ENCODE measurements at regions of chr17 and their contacts with region 1.

Region 1: DNA sequence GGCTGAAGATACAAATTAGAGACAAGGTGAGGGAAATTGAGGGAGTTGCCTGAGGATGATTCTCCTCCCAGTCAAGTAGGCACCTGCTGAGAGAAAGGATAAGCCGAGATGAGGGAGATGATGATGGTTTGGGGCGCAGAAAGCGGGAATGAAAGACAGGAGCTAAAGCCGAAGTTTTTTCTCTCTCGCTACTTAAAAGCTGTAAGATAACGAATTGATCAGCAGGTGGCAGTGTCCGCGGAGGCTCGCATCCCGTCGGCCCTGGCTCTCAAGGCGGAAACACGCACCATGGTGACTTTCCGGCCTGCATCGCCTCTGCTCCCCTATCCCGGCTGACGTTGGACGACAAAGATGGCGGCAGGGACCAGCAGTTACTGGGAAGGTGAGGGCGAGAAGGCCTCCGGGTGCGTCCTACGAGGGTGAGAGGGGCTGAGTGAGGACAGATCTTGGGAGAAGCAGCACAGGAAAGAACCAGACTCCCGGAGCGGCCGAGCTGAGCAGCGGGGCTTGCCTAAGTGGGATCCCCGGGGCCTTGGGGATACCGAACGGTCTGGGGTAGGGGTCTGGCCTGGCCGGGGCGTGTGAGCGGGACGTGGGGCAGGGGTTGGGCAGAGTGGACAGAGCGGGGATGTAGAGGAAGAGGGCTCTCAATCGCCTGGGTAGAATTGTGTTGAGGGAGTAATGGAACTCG is at the start of gene GOSR1:
- DNase-seq: peak; percentile 79
- ATAC-seq: peak; percentile 99
- H3K4me3 ChIP-seq: peak within 1 kb of the TSS; percentile 93
- H3K27ac ChIP-seq: peak within 1 kb of the TSS; percentile 99
- H3K4me1 ChIP-seq: peaks cover 7% of the 10 kb centered on the region
- H3K27me3 ChIP-seq: no peaks in the 10 kb centered on the region
- CTCF ChIP-seq: peak; percentile 72 to 88 (median 83)
- EP300 ChIP-seq: no peak
- POLR2A ChIP-seq: peak; percentile 100
- RAD21 ChIP-seq: peak; percentile 57
- polyA plus RNA-seq, gene GOSR1: 71.0 to 99.3 TPM

Region 2: GRCh38 chr17:30041551-30041950 is 435.7 kb before region 1 on chr17:
- CTCF ChIA-PET with region 1: no interaction called
- POLR2A ChIA-PET with region 1: no interaction called
- RAD21 ChIA-PET with region 1: no interaction called
- SMC1A ChIA-PET with region 1: no interaction called
- in situ Hi-C with region 1: no loop called
- intact Hi-C with region 1: no loop called
- DNase-seq: no peak
- ATAC-seq: no peak
- H3K4me3 ChIP-seq: no peak overlapping the region
- H3K27ac ChIP-seq: no peak overlapping the region
- H3K4me1 ChIP-seq: no peaks in the 10 kb centered on the region
- H3K27me3 ChIP-seq: no peaks in the 10 kb centered on the region
- CTCF ChIP-seq: no peak
- EP300 ChIP-seq: no peak
- POLR2A ChIP-seq: no peak
- RAD21 ChIP-seq: no peak

Region 3: DNA sequence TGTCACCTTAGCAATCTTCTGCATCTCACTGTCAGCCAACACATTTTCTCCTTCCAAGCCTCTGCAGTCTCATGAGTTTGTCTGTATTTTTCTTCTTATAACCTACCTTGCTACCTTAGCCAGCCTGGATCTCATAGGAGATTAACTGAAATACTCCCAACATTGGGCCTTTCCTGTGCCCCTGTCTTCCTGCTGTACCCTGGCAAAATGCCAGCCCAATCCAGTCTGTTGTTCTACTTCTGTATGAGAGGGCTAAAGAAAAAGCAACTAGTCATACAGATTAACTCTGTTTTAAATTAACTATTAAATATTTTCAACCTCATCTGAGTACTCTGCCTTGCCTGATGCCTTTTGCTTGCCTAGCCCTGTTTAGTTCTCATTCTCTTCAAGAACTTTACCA is 18.4 kb after region 1 on chr17:
- CTCF ChIA-PET with region 1: interaction called, 10 read pairs
- POLR2A ChIA-PET with region 1: no interaction called
- RAD21 ChIA-PET with region 1: no interaction called
- SMC1A ChIA-PET with region 1: interaction called, 8 read pairs
- in situ Hi-C with region 1: no loop called
- intact Hi-C with region 1: no loop called
- DNase-seq: no peak
- ATAC-seq: no peak
- H3K4me3 ChIP-seq: no peak overlapping the region
- H3K27ac ChIP-seq: no peak overlapping the region
- H3K4me1 ChIP-seq: no peaks in the 10 kb centered on the region
- H3K27me3 ChIP-seq: no peaks in the 10 kb centered on the region
- CTCF ChIP-seq: no peak
- EP300 ChIP-seq: no peak
- POLR2A ChIP-seq: no peak
- RAD21 ChIP-seq: no peak

Region 4: GRCh38 chr17:30534938-30535921 is 58.0 kb after region 1 on chr17:
- CTCF ChIA-PET with region 1: no interaction called
- POLR2A ChIA-PET with region 1: no interaction called
- RAD21 ChIA-PET with region 1: no interaction called
- SMC1A ChIA-PET with region 1: no interaction called
- in situ Hi-C with region 1: no loop called
- intact Hi-C with region 1: no loop called
- DNase-seq: no peak
- ATAC-seq: no peak
- H3K4me3 ChIP-seq: no peak overlapping the region
- H3K27ac ChIP-seq: no peak overlapping the region
- H3K4me1 ChIP-seq: no peaks in the 10 kb centered on the region
- H3K27me3 ChIP-seq: no peaks in the 10 kb centered on the region
- CTCF ChIP-seq: no peak
- EP300 ChIP-seq: no peak
- POLR2A ChIP-seq: no peak
- RAD21 ChIP-seq: no peak

Region 5: DNA sequence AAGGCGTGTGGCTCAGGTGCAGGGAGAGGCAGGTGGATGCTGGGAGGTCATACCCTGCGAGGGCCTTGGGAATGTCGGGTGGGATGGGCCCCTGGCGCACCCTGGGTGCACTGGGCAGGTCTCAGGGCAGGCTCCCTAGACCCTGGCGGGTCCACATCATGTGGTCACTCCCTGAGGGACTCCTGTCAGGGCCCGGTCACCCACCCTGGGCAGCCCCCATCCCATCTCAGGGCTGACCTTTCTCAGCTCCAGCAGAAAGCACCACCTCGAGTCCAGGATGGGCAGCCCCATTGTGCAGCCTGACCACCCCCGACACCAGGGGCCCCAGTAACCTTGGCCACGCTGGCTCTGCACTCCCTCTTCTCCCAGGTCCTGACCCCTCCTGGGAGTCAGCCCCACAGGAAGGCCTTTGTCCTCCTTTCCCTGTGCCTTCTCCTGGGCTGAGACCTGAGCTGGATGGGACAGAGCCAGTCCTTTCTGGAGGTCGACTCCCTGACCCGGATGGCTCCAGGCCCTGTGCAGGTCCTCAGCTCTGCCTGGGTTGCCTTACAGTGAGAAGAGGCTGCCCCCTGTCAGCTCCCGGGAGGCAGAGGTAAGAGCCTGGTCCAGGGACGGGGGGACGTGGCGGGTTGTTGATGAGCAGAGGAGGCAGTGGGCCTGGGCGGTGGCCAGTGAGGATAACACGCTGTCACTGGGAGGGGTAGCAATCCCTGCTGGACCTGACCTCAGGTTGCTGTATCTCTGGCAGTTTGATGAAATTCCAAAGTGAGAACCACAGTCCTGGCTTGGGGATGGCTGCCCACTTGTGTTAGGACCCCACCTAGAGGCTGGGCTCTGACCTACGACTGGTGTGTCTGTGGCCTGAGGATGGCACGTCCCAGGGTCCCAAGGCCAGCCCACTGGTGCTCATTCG is 77.9 kb after region 1 on chr17:
- CTCF ChIA-PET with region 1: no interaction called
- POLR2A ChIA-PET with region 1: no interaction called
- RAD21 ChIA-PET with region 1: no interaction called
- SMC1A ChIA-PET with region 1: no interaction called
- in situ Hi-C with region 1: no loop called
- intact Hi-C with region 1: loop called (anchors 2 kb)
- DNase-seq: no peak
- ATAC-seq: peak; percentile 27; the same call in 1 of the 3 replicates
- H3K4me3 ChIP-seq: no peak overlapping the region
- H3K27ac ChIP-seq: no peak overlapping the region
- H3K4me1 ChIP-seq: peaks cover 10% of the 10 kb centered on the region
- H3K27me3 ChIP-seq: no peaks in the 10 kb centered on the region; a peak in 1 of 4 replicates
- CTCF ChIP-seq: peak; percentile 15 to 30 (median 19); a peak in 3 of 6 replicates
- EP300 ChIP-seq: no peak
- POLR2A ChIP-seq: no peak
- RAD21 ChIP-seq: no peak

Region 6: DNA sequence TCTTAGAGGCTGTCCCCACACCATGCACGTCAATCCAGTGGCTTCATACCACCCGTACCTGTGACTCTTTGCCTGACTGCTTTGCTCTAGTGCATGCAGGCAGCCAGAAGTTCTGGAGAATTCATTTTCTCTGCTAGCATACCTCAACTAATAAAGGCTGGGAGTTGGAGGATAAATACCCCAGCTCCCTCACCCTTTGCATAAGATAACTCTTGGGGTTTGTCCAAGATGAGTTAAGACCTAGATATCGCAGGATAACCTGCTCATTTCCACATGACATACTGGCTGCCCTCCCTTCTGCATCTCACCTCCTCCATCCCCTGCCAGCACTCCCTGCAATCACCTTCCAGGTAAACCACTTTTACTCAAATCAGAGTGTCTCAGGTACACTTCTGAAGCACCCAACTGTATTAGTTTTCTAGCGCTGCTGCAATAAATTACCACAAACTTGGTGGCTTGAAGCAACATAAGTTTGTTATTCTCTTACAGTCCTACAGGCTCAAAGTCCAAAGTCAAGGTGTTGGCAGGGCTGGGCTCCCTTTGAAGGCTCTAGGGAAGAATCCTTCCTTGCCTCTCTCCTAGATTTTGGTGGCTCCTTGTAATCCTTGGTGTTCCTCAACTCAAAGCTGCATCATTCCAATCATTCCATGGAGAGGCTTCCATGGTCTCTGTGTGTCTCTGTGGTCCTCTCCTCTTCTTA is 200.5 kb after region 1 on chr17:
- CTCF ChIA-PET with region 1: no interaction called
- POLR2A ChIA-PET with region 1: no interaction called
- RAD21 ChIA-PET with region 1: no interaction called
- SMC1A ChIA-PET with region 1: no interaction called
- in situ Hi-C with region 1: no loop called
- intact Hi-C with region 1: no loop called
- DNase-seq: no peak
- ATAC-seq: no peak
- H3K4me3 ChIP-seq: no peak overlapping the region
- H3K27ac ChIP-seq: no peak overlapping the region
- H3K4me1 ChIP-seq: no peaks in the 10 kb centered on the region
- H3K27me3 ChIP-seq: no peaks in the 10 kb centered on the region
- CTCF ChIP-seq: no peak
- EP300 ChIP-seq: no peak
- POLR2A ChIP-seq: no peak
- RAD21 ChIP-seq: no peak

Region 7: GRCh38 chr17:30716461-30717300 is 239.5 kb after region 1 on chr17:
- CTCF ChIA-PET with region 1: interaction called, 11 read pairs
- POLR2A ChIA-PET with region 1: no interaction called
- RAD21 ChIA-PET with region 1: interaction called, 22 read pairs
- SMC1A ChIA-PET with region 1: interaction called, 4 read pairs
- in situ Hi-C with region 1: loop called (anchors 5 kb)
- intact Hi-C with region 1: loop called (anchors 5 kb)
- DNase-seq: no peak
- ATAC-seq: peak; percentile 12; the same call in 1 of the 3 replicates
- H3K4me3 ChIP-seq: no peak overlapping the region
- H3K27ac ChIP-seq: no peak overlapping the region
- H3K4me1 ChIP-seq: no peaks in the 10 kb centered on the region; the same call in 1 of the 2 replicates
- H3K27me3 ChIP-seq: no peaks in the 10 kb centered on the region
- CTCF ChIP-seq: peak; percentile 11 to 38 (median 28); a peak in 4 of 6 replicates
- EP300 ChIP-seq: no peak
- POLR2A ChIP-seq: no peak
- RAD21 ChIP-seq: peak; percentile 26; the same call in 1 of the 2 replicates